Right ventricle myocardium inferior (tissue), 1 donor: ENCODE measurements at regions of chr20 and their contacts with region 1.

Region 1: GRCh38 chr20:8853805-8854338 is 215.0 kb upstream of the PLCB4 start:
- DNase-seq: no peak
- ATAC-seq: peak; percentile 81

Region 2: GRCh38 chr20:8790442-8791074 is 63.3 kb before region 1 on chr20:
- intact Hi-C with region 1: loop called (anchors 2 kb)
- DNase-seq: no peak
- ATAC-seq: peak; percentile 23

Region 3: GRCh38 chr20:8837396-8837795 is 16.5 kb before region 1 on chr20:
- intact Hi-C with region 1: no loop called
- DNase-seq: no peak
- ATAC-seq: no peak

Region 4: DNA sequence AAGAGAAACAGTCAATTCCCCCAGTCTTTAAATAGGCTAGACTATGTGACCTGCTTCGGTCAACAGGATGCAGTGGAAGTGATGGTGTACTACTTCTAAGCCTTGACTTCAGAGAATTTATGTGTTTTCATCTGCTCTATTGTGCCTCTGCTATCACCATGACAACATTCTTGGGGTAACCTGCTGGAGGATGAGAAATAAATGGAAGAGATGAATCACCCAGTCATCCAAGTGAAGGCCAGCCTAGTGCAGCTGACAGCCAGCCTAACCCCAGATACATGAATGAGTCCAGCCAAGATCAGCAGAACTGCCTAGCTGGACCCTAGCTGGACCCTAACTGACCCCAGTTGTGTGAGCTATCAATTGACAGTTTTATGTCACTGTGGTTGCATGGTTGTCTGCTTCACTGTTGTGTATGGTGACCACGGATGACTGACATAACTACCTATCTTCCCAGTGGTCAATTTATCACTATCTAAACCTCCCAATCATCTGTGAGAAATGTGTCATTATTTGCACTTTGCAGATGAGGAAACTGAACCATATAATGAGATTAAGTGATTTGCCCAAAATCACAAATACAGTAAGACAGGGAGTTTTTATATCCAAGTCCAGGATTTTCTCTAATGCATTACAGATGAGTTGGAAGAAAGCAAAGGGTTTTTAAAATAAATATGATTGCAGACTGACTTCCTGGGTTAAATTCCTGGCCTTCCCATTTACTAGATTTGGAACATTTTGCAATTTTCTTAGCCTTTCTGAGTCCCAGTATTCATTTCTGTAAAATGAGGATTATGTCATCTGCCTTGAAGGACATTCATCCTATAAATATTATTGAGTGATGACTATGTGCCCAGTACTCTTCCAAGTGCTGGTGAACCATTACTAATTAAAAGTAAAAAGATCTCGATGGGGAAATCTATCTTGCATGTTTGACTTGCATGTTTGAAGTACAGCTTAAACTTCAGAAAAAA is 78.6 kb after region 1 on chr20:
- intact Hi-C with region 1: loop called (anchors 2 kb)
- DNase-seq: no peak
- ATAC-seq: peak; percentile 30

Region 5: GRCh38 chr20:9068851-9069663 is 215.2 kb after region 1 on chr20 and contains the start of gene PLCB4:
- intact Hi-C with region 1: loop called (anchors 2 kb)
- DNase-seq: peak; percentile 76
- ATAC-seq: peak; percentile 31
- total RNA-seq, gene PLCB4: 27.7 TPM

Region 6: DNA sequence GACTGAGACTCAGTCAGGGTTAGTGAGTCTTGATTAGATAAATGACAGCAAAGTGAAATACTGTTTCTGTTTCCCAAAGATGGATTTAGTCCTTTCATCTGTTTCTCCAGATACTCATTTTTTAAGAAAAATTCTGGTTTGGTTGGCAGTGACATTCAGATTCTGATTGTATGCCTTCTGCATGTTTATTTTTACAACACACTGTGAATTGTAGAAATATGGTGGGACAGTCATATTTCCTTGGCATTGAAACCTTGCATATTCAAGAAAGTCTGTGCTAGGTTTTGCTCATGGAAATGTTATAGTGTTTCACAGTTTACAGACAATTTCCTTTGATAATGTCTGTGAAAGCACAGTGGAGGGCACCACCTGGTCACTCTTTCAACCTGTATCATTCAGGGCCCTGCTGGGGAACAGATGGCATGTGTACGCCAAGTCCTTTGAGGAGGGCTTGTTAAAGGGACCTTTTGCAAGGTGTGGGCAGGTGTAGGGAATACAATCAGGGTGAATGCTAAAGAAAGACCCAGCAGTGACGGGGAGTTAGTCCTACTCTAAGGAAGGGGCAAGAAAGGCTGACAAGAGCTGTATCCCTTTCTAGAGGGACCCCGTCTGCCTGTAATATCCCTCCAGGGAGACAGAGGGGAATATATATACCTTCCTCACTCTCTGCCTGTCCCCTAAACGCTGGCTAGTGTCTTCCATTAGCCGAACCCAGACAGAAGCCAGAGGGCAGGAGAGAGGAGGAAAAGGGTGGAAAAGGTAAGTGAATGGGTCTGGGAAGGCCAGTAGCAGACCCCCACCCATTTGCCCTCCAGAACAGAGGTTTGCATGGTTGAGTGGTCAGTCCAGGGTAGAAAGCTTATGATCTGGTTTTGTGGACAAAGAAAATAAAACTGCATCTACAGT is 225.2 kb after region 1 on chr20:
- intact Hi-C with region 1: no loop called
- DNase-seq: no peak
- ATAC-seq: no peak

Region 7: GRCh38 chr20:9359561-9360308 is 505.9 kb after region 1 on chr20:
- intact Hi-C with region 1: loop called (anchors 2 kb)
- DNase-seq: no peak
- ATAC-seq: peak; percentile 46